Natural killer cell (primary cell): ENCODE measurements at regions of chr1 and their contacts with region 1.

Region 1: DNA sequence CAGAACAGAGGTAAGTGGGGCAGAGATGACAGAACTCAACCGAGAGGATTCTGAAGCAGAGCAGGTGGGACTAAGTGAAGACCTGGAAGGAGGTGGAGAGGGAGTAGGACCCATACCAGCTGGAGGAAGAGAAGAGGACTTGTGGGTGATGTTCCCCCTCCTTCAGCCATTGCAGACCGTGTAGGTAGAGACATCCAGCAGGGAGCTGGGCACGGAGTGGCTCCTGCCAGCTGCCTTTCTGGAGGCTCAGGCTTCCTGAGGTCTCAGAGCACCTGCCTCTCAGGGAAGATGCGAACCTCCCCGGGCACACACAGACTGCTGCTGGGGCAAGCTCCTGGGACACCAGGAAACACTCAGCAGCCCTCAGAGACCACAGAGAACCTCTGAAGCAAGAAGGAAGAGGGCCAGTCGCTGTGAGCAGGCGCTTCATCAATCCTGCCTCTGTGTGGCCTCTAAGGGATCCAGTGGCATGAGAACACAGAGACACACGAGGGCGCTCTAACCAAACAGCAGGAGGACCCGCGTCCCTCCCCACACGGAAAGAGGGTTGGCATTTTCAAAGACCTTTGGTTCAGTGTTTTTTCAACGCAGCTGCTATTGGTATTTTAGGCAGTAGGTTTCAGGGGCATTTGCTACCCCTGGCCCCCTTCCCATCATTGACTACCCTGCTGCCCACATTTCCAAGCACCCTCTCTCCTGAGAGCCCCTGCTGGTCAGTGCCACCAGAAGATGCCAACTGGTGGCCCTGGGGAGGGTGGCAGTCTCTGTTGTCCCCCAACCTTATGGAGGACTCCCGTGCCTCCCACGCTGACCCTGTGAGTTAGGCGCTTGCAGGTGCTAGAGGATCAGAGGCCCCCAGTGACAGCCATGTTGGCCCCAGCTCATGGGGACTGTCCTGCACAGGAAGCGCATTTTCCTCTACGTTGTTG is 89.6 kb upstream of the EDN2 start:
- DNase-seq: peak; percentile 73 to 92
- ATAC-seq: peak; percentile 88 to 99 (median 99)
- H3K4me3 ChIP-seq: no peak overlapping the region
- H3K4me3 Mint-ChIP-seq: no peak overlapping the region
- H3K27ac ChIP-seq: no peak overlapping the region
- H3K27ac Mint-ChIP-seq: peak overlapping the region in 1 of 2 donors; percentile 44
- H3K4me1 ChIP-seq: peaks cover 10% of the 10 kb centered on the region
- H3K4me1 Mint-ChIP-seq: peaks cover 19% of the 10 kb centered on the region in 2 donors
- H3K27me3 ChIP-seq: no peaks in the 10 kb centered on the region
- H3K27me3 Mint-ChIP-seq: no peaks in the 10 kb centered on the region
- CTCF ChIP-seq: peak; percentile 93

Region 2: DNA sequence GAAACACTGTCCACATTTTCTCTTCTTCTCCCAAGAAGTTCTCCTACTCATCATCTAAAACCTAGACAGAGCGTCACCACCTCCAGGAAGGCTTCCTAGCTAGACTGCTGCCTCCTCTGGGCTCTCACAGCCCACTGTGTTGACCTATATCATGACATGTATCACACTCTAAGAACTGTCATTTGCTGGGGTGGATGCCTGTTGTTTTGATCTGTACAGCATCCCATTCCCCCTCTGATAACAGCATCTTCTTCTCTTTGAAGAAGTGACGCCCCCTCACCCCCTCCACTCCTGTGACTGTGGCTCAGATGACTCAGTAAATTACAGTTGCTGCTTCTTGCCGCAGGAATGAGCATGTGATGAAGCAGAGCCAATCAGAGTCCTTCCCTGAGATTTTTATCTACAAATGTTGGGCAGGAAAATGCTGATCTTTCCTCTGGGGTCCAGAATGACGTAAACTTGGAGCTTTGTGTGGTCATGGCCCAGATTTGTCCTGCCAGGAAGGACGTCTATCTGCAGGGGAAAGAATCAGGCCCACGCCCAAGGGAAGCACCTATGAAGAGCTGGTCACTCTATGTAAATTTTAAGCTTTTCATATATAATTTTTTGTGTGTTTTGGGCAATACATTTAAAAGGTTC is 240.8 kb before region 1 on chr1:
- intact Hi-C with region 1: no loop called
- DNase-seq: peak in 1 of 2 donors; percentile 7
- ATAC-seq: peak in 1 of 3 donors; percentile 57
- H3K4me3 ChIP-seq: no peak overlapping the region
- H3K4me3 Mint-ChIP-seq: no peak overlapping the region
- H3K27ac ChIP-seq: no peak overlapping the region
- H3K27ac Mint-ChIP-seq: no peak overlapping the region
- H3K4me1 ChIP-seq: no peaks in the 10 kb centered on the region
- H3K4me1 Mint-ChIP-seq: peaks cover 0 to 5% of the 10 kb centered on the region in 2 donors
- H3K27me3 ChIP-seq: peaks cover 5% of the 10 kb centered on the region
- H3K27me3 Mint-ChIP-seq: peaks cover 13 to 22% of the 10 kb centered on the region in 2 donors
- CTCF ChIP-seq: no peak

Region 3: GRCh38 chr1:41414716-41415322 is 159.2 kb before region 1 on chr1:
- intact Hi-C with region 1: no loop called
- DNase-seq: no peak
- ATAC-seq: no peak
- H3K4me3 ChIP-seq: no peak overlapping the region
- H3K4me3 Mint-ChIP-seq: no peak overlapping the region
- H3K27ac ChIP-seq: no peak overlapping the region
- H3K27ac Mint-ChIP-seq: no peak overlapping the region
- H3K4me1 ChIP-seq: no peaks in the 10 kb centered on the region
- H3K4me1 Mint-ChIP-seq: peaks cover 0 to 11% of the 10 kb centered on the region in 2 donors
- H3K27me3 ChIP-seq: no peaks in the 10 kb centered on the region
- H3K27me3 Mint-ChIP-seq: peaks cover 9 to 15% of the 10 kb centered on the region in 2 donors
- CTCF ChIP-seq: no peak

Region 4: GRCh38 chr1:41540886-41541591 is 33.0 kb before region 1 on chr1:
- intact Hi-C with region 1: no loop called
- DNase-seq: no peak
- ATAC-seq: no peak
- H3K4me3 ChIP-seq: no peak overlapping the region
- H3K4me3 Mint-ChIP-seq: no peak overlapping the region
- H3K27ac ChIP-seq: no peak overlapping the region
- H3K27ac Mint-ChIP-seq: peak overlapping the region in 1 of 2 donors; percentile 57
- H3K4me1 ChIP-seq: peaks cover 11% of the 10 kb centered on the region
- H3K4me1 Mint-ChIP-seq: peaks cover 22 to 27% of the 10 kb centered on the region in 2 donors
- H3K27me3 ChIP-seq: no peaks in the 10 kb centered on the region
- H3K27me3 Mint-ChIP-seq: no peaks in the 10 kb centered on the region
- CTCF ChIP-seq: no peak

Region 5: DNA sequence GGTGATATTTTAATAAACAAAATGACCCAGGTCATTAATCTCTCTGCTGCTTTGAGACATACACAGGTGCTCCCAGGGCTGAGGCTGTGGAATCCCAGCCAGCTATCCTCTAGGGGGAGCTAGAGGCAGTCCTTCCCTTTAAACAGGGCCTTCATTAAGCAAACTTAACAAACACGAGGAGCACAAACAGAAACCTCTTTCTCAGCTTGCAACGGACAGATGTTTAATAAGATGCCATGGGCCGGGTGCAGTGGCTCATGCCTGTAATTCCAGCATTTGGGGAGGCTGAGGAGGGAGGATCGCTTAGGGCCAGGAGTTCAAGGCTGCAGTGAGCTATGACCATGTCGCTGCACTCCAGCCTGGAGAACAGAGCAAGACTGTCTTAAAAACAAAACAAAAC is 238.0 kb after region 1 on chr1:
- intact Hi-C with region 1: loop called (anchors 2 kb)
- DNase-seq: peak in 1 of 2 donors; percentile 75
- ATAC-seq: peak; percentile 54 to 69 (median 59)
- H3K4me3 ChIP-seq: no peak overlapping the region
- H3K4me3 Mint-ChIP-seq: peak overlapping the region; percentile 8
- H3K27ac ChIP-seq: no peak overlapping the region
- H3K27ac Mint-ChIP-seq: peak overlapping the region in 1 of 2 donors; percentile 68
- H3K4me1 ChIP-seq: peaks cover 46% of the 10 kb centered on the region
- H3K4me1 Mint-ChIP-seq: peaks cover 56 to 58% of the 10 kb centered on the region in 2 donors
- H3K27me3 ChIP-seq: no peaks in the 10 kb centered on the region
- H3K27me3 Mint-ChIP-seq: no peaks in the 10 kb centered on the region
- CTCF ChIP-seq: peak; percentile 68

Region 6: GRCh38 chr1:41868599-41868998 is 294.6 kb after region 1 on chr1:
- intact Hi-C with region 1: loop called (anchors 10 kb)
- DNase-seq: peak in 1 of 2 donors; percentile 56
- ATAC-seq: peak; percentile 52 to 75 (median 60)
- H3K4me3 ChIP-seq: no peak overlapping the region
- H3K4me3 Mint-ChIP-seq: no peak overlapping the region
- H3K27ac ChIP-seq: no peak overlapping the region
- H3K27ac Mint-ChIP-seq: peak overlapping the region in 1 of 2 donors; percentile 41
- H3K4me1 ChIP-seq: peaks cover 4% of the 10 kb centered on the region
- H3K4me1 Mint-ChIP-seq: peaks cover 24 to 25% of the 10 kb centered on the region in 2 donors
- H3K27me3 ChIP-seq: no peaks in the 10 kb centered on the region
- H3K27me3 Mint-ChIP-seq: no peaks in the 10 kb centered on the region
- CTCF ChIP-seq: no peak

Region 7: GRCh38 chr1:41980827-41981653 is 407.0 kb after region 1 on chr1:
- intact Hi-C with region 1: loop called (anchors 10 kb)
- DNase-seq: peak in 1 of 2 donors; percentile 24
- ATAC-seq: peak; percentile 68 to 86 (median 70)
- H3K4me3 ChIP-seq: no peak overlapping the region
- H3K4me3 Mint-ChIP-seq: peak overlapping the region; percentile 68
- H3K27ac ChIP-seq: no peak overlapping the region
- H3K27ac Mint-ChIP-seq: peak overlapping the region; percentile 52 to 79
- H3K4me1 ChIP-seq: peaks cover 17% of the 10 kb centered on the region
- H3K4me1 Mint-ChIP-seq: peaks cover 46 to 63% of the 10 kb centered on the region in 2 donors
- H3K27me3 ChIP-seq: no peaks in the 10 kb centered on the region
- H3K27me3 Mint-ChIP-seq: no peaks in the 10 kb centered on the region
- CTCF ChIP-seq: no peak

Region 8: GRCh38 chr1:42085596-42085995 is 511.5 kb after region 1 on chr1:
- intact Hi-C with region 1: loop called (anchors 10 kb)
- DNase-seq: no peak
- ATAC-seq: no peak
- H3K4me3 ChIP-seq: no peak overlapping the region
- H3K4me3 Mint-ChIP-seq: no peak overlapping the region
- H3K27ac ChIP-seq: no peak overlapping the region
- H3K27ac Mint-ChIP-seq: no peak overlapping the region
- H3K4me1 ChIP-seq: no peaks in the 10 kb centered on the region
- H3K4me1 Mint-ChIP-seq: peaks cover 0 to 7% of the 10 kb centered on the region in 2 donors
- H3K27me3 ChIP-seq: peaks cover 2% of the 10 kb centered on the region
- H3K27me3 Mint-ChIP-seq: peaks cover 24 to 38% of the 10 kb centered on the region in 2 donors
- CTCF ChIP-seq: no peak

Region 9: GRCh38 chr1:42173155-42173933 is 599.3 kb after region 1 on chr1:
- intact Hi-C with region 1: loop called (anchors 1 kb)
- DNase-seq: peak; percentile 65 to 74
- ATAC-seq: peak; percentile 75 to 86 (median 83)
- H3K4me3 ChIP-seq: no peak overlapping the region
- H3K4me3 Mint-ChIP-seq: no peak overlapping the region
- H3K27ac ChIP-seq: no peak overlapping the region
- H3K27ac Mint-ChIP-seq: no peak overlapping the region
- H3K4me1 ChIP-seq: no peaks in the 10 kb centered on the region
- H3K4me1 Mint-ChIP-seq: peaks cover 0 to 4% of the 10 kb centered on the region in 2 donors
- H3K27me3 ChIP-seq: no peaks in the 10 kb centered on the region
- H3K27me3 Mint-ChIP-seq: no peaks in the 10 kb centered on the region
- CTCF ChIP-seq: peak; percentile 93